Mammary epithelial cell (primary cell): ENCODE measurements at regions of chr3 and their contacts with region 1.

Region 1: GRCh38 chr3:187164885-187165543 is 25.7 kb upstream of the RPL39L start:
- DNase-seq: peak; percentile 55
- H3K4me3 ChIP-seq: no peak overlapping the region
- H3K27ac ChIP-seq: no peak overlapping the region
- H3K4me1 ChIP-seq: peaks cover 10% of the 10 kb centered on the region
- H3K27me3 ChIP-seq: no peaks in the 10 kb centered on the region
- CTCF ChIP-seq: peak; percentile 60 to 64

Region 2: DNA sequence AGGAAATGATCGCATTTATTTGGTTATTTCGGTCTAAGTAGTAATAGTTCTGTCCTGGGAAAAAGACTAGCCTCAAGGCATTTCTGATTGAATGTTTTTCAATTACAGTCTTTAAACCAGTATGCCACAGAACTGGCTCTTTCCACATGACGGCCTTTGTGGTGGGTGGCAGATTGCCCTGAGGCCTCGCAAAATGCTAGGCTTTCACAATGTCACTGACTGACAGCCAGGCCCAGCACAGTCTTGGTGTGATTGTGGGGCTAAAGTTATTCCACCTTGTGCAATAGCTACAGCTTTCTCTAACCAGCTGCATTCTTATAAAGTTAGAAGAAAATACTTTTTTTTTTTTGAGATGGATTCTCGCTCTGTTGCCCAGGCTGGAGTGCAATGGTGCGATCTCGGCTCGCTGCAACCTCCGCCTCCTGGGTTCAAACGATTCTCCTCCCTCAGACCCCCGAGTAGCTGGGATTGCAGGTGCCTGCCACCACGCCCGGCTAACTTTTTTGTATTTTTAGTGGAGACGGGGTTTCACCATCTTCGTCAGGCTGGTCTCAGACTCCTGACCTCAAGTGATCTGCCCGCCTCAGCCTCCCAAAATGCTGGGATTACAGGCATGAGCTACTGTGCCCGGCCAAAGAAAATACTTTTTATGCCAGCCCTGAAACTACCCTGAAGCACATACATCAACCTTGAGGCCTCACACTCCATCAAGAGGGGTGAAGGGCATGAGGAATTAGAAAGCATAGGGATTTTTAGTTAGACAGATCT is 325.0 kb before region 1 on chr3:
- CTCF ChIA-PET with region 1: no interaction called
- dilution Hi-C with region 1: no loop called
- in situ Hi-C with region 1: loop called (anchors 10 kb)
- intact Hi-C with region 1: no loop called
- DNase-seq: no peak
- H3K4me3 ChIP-seq: no peak overlapping the region
- H3K27ac ChIP-seq: no peak overlapping the region
- H3K4me1 ChIP-seq: no peaks in the 10 kb centered on the region
- H3K27me3 ChIP-seq: no peaks in the 10 kb centered on the region
- CTCF ChIP-seq: no peak

Region 3: GRCh38 chr3:187112934-187113793 is 51.9 kb before region 1 on chr3:
- CTCF ChIA-PET with region 1: interaction called, 18 read pairs
- dilution Hi-C with region 1: no loop called
- in situ Hi-C with region 1: loop called in 1 of 2 experiments (anchors 10 kb)
- intact Hi-C with region 1: loop called (anchors 1 kb)
- DNase-seq: peak; percentile 24
- H3K4me3 ChIP-seq: no peak overlapping the region
- H3K27ac ChIP-seq: no peak overlapping the region
- H3K4me1 ChIP-seq: peaks cover 7% of the 10 kb centered on the region
- H3K27me3 ChIP-seq: no peaks in the 10 kb centered on the region
- CTCF ChIP-seq: peak; percentile 48 to 54

Region 4: DNA sequence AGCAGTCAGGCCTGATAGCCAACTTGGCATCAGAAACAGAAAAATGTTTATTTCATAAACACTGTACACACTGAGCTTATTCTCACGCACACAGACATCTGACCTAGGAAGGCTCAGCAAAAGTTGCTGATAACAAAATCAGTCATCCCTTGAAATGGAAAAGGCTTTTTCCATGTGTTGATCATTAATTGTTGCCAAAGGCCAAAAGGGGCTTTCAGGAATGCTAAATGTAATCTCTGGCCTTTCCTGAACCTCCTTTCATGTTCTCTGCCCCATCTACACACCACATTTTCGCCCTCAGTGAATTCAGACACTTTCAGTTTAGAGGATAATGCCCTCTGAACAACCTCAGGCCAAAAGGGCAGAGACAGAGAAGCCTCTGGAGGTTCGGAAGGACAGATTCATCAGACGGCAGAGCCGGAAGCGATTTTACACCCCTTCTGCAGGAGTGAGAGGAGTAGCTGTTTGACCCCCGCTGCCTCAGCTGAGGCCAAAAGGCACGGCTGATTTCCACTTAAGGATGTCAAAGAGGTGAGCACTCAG is 217.7 kb after region 1 on chr3:
- CTCF ChIA-PET with region 1: no interaction called
- dilution Hi-C with region 1: no loop called
- in situ Hi-C with region 1: no loop called
- intact Hi-C with region 1: no loop called
- DNase-seq: no peak
- H3K4me3 ChIP-seq: no peak overlapping the region
- H3K27ac ChIP-seq: no peak overlapping the region
- H3K4me1 ChIP-seq: no peaks in the 10 kb centered on the region
- H3K27me3 ChIP-seq: no peaks in the 10 kb centered on the region
- CTCF ChIP-seq: no peak